H1 (cell line): ENCODE measurements at regions of chr1 and their contacts with region 1.

Region 1: GRCh38 chr1:234212764-234213657 is 160.2 kb upstream of the COA6 start:
- DNase-seq: no peak
- H3K4me3 ChIP-seq: peak overlapping the region in 1 of 4 experiments; percentile 70; a peak in 1 of 8 replicates
- H3K27ac ChIP-seq: no peak overlapping the region
- H3K4me1 ChIP-seq: peaks cover 0 to 9% (median 6%) of the 10 kb centered on the region in 4 experiments; a peak in 4 of 7 replicates
- H3K27me3 ChIP-seq: peaks cover 0 to 15% (median 9%) of the 10 kb centered on the region in 4 experiments; a peak in 6 of 7 replicates
- CTCF ChIP-seq: peak in 2 of 3 experiments; percentile 81 to 84; a peak in 3 of 4 replicates
- EP300 ChIP-seq: no peak
- POLR2A ChIP-seq: no peak
- RAD21 ChIP-seq: peak; percentile 65 to 79; a peak in 3 of 4 replicates

Region 2: GRCh38 chr1:234125283-234125682 is 87.7 kb before region 1 on chr1:
- CTCF ChIA-PET with region 1: interaction called, 20 read pairs
- POLR2A ChIA-PET with region 1: no interaction called
- DNase-seq: peak; percentile 56 to 82
- H3K4me3 ChIP-seq: no peak overlapping the region
- H3K27ac ChIP-seq: no peak overlapping the region
- H3K4me1 ChIP-seq: 0 out of 7 replicates have a peak, but pooled peaks cover 0 to 2% (median 0%) of the 10 kb centered on the region in 4 experiments
- H3K27me3 ChIP-seq: no peaks in the 10 kb centered on the region
- CTCF ChIP-seq: peak; percentile 79 to 94 (median 89)
- EP300 ChIP-seq: no peak
- POLR2A ChIP-seq: no peak
- RAD21 ChIP-seq: peak; percentile 96 to 97

Region 3: GRCh38 chr1:234188454-234188792 is 24.6 kb before region 1 on chr1:
- CTCF ChIA-PET with region 1: interaction called, 24 read pairs
- POLR2A ChIA-PET with region 1: no interaction called
- DNase-seq: peak; percentile 64 to 85
- H3K4me3 ChIP-seq: no peak overlapping the region
- H3K27ac ChIP-seq: peak overlapping the region; percentile 65; the same call in 1 of the 2 replicates
- H3K4me1 ChIP-seq: peaks cover 0 to 5% (median 2%) of the 10 kb centered on the region in 4 experiments; a peak in 4 of 7 replicates
- H3K27me3 ChIP-seq: no peaks in the 10 kb centered on the region
- CTCF ChIP-seq: peak; percentile 69 to 73 (median 71)
- EP300 ChIP-seq: no peak; a peak in 1 of 3 replicates
- POLR2A ChIP-seq: no peak
- RAD21 ChIP-seq: peak; percentile 53 to 58

Region 4: DNA sequence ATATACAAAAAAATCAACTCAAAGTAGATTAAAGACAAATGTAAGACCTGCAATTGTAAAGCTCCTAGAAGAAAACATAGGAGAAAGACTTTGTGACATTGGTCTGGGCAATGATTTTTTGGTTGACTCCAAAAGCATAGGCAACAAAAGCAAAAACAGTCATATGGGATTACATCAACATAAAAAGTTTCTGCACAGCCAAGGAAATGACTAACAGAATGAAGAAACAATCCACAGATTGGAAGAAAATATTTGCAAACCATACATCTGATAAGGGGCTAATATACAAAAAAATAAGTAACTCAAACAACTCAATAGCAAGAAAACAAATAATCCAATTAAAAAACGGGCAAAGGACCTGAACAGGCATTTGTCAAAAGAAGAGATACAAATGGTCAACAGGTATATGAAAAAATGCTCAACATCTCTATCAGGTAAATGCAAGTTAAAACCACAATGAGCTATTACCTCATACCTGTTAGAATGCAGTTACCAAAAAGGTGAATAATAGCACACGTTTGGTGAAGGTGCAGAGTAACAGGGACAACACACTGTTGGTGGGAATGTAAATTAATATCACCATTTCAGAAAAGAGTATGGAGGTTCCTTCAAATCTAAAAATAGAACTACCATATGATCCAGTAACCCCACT is 13.4 kb before region 1 on chr1:
- CTCF ChIA-PET with region 1: interaction called, 39 read pairs
- POLR2A ChIA-PET with region 1: interaction called, 3 read pairs
- DNase-seq: no peak
- H3K4me3 ChIP-seq: no peak overlapping the region
- H3K27ac ChIP-seq: no peak overlapping the region
- H3K4me1 ChIP-seq: no peaks in the 10 kb centered on the region
- H3K27me3 ChIP-seq: no peaks in the 10 kb centered on the region
- CTCF ChIP-seq: no peak
- EP300 ChIP-seq: no peak
- POLR2A ChIP-seq: no peak
- RAD21 ChIP-seq: no peak

Region 5: DNA sequence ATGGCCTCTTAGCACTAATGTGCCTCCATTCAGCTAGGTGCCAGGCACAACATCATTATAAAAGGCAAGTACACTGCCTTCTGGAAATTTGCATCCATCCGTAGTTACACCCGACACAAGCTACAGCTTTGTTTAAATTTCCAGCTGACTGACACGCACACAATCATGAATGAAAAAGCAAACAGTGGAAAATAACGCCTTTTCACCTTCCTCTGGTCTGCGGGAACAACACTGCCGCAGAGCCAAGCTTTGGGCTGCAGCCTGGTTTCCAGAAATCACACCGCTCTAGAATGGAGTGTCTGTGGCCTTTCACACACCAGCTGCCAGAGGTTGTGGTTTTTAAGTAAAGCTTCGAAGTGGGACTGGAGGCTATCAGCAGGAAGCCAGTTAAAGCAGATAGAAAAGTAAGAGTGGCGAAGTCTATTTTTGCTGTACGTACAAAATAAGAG is 17.4 kb after region 1 on chr1:
- CTCF ChIA-PET with region 1: interaction called, 62 read pairs
- POLR2A ChIA-PET with region 1: interaction called, 6 read pairs
- DNase-seq: no peak
- H3K4me3 ChIP-seq: no peak overlapping the region
- H3K27ac ChIP-seq: no peak overlapping the region
- H3K4me1 ChIP-seq: peaks cover 2 to 13% (median 9%) of the 10 kb centered on the region in 4 experiments
- H3K27me3 ChIP-seq: no peaks in the 10 kb centered on the region; a peak in 1 of 7 replicates
- CTCF ChIP-seq: no peak
- EP300 ChIP-seq: no peak
- POLR2A ChIP-seq: no peak
- RAD21 ChIP-seq: no peak

Region 6: DNA sequence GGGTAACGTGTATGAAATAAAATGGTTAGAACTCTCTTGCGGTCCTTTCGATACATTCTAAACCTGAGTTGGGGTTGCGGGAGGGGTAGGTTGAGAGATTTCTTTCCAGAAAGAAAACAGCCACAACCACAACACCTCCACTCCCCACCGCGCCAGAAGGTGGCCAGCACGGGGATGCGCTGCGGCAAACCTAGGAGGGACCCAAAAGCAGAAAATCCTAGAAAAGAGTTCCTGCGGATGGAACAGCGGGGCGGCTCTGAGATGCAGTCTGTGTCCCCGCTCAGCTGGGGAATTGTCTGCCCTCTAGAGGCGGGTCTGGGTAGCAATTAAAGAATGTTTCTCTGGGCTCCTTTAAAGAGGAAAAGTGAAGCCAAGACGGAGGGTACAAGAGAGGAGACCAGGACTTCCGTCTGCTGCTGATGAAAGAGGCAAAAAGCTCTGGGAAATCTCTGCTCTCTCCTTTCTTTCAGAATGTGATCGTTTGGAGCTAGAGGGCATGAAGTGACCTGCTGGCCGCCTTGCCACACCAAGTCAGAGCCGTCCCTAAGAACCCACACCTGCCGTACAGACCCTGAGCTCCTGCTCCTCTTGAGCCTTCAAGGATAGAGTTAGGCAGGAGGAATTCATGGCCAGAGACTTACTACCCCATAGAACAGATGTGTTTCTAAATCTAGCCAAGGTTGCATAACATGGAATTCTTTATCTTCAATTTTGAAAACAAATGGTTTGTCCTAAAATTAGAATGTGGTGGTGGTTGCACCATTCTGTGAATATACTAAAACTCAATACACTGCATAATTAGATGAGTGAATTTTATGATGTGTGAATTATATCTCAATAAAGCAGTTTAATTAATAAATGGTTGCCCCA is 113.7 kb after region 1 on chr1:
- CTCF ChIA-PET with region 1: interaction called, 35 read pairs
- POLR2A ChIA-PET with region 1: no interaction called
- DNase-seq: peak; percentile 41 to 88
- H3K4me3 ChIP-seq: peak overlapping the region in 1 of 4 experiments; percentile 50; a peak in 1 of 8 replicates
- H3K27ac ChIP-seq: no peak overlapping the region
- H3K4me1 ChIP-seq: peaks cover 0 to 3% (median under 1%) of the 10 kb centered on the region in 4 experiments; a peak in 1 of 7 replicates
- H3K27me3 ChIP-seq: no peaks in the 10 kb centered on the region
- CTCF ChIP-seq: peak; percentile 73 to 85 (median 77)
- EP300 ChIP-seq: no peak
- POLR2A ChIP-seq: no peak
- RAD21 ChIP-seq: peak; percentile 57 to 67